ENCODE measurements at regions of chr21 and their contacts with region 1.

Region 1: GRCh38 chr21:44497703-44498126 is 42.3 kb downstream of the KRTAP10-1 start:
- DNase-seq: no peak
- ATAC-seq: peak in 2 of 8 donors; percentile 23 to 26
- H3K4me3 ChIP-seq: no peak overlapping the region
- H3K27ac ChIP-seq: peak overlapping the region in 1 of 10 donors; percentile 8
- H3K4me1 ChIP-seq: peaks cover 0 to 32% (median 18%) of the 10 kb centered on the region in 9 donors
- H3K27me3 ChIP-seq: peaks cover 0 to 52% (median 6%) of the 10 kb centered on the region in 7 donors
- CTCF ChIP-seq: no peak

Region 2: GRCh38 chr21:44370027-44370735 is 127.5 kb before region 1 on chr21:
- intact Hi-C with region 1: no loop called
- DNase-seq: no peak
- ATAC-seq: peak in 1 of 8 donors; percentile 26
- H3K4me3 ChIP-seq: no peak overlapping the region
- H3K27ac ChIP-seq: no peak overlapping the region
- H3K4me1 ChIP-seq: peaks cover 0 to 18% (median 0%) of the 10 kb centered on the region in 9 donors
- H3K27me3 ChIP-seq: peaks cover 0 to 64% (median 24%) of the 10 kb centered on the region in 7 donors
- CTCF ChIP-seq: no peak

Region 3: GRCh38 chr21:44423312-44423821 is 74.3 kb before region 1 on chr21:
- intact Hi-C with region 1: no loop called
- DNase-seq: no peak
- ATAC-seq: no peak
- H3K4me3 ChIP-seq: no peak overlapping the region
- H3K27ac ChIP-seq: no peak overlapping the region
- H3K4me1 ChIP-seq: no peaks in the 10 kb centered on the region
- H3K27me3 ChIP-seq: peaks cover 0 to 16% (median 3%) of the 10 kb centered on the region in 7 donors
- CTCF ChIP-seq: no peak

Region 4: GRCh38 chr21:44551340-44551961 is 53.7 kb after region 1 on chr21 and contains the start of gene KRTAP10-2:
- intact Hi-C with region 1: loop called in 1 of 10 experiments (anchors 10 kb)
- DNase-seq: no peak
- ATAC-seq: peak in 1 of 8 donors; percentile 34
- H3K4me3 ChIP-seq: no peak within 1 kb of the TSS
- H3K27ac ChIP-seq: no peak within 1 kb of the TSS
- H3K4me1 ChIP-seq: no peaks in the 10 kb centered on the region
- H3K27me3 ChIP-seq: peaks cover 0 to 80% (median 50%) of the 10 kb centered on the region in 7 donors
- CTCF ChIP-seq: no peak
- total RNA-seq, gene KRTAP10-2: not detected